ENCODE measurements at regions of chr3 and their contacts with region 1.

Region 1: DNA sequence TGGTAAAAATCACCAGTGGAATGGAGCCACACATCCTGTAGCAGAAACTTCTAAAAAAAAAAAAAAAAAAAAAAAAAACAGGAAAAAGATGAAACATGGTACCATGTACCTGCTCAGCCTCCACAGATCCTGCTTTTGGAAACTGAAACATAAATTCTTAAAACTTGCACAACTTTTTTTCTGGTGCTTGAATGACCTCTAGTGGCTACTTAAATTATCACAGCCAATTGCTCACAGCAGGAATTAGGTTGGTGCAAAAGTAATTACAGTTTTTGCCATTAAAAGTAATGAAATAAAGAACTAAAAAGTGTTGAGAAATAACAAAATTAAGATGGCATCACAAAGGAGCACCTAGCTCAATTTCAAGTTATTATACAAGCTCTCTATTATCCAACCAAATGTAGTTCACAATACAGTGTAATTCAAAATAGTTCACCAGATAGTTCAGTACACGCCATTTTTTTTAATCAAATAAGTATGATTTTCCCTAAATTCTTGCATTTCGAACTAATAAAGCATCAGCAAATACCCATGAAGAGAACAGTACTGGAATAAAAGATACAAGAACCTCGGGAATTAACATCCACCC is 80.6 kb downstream of the ULK4 start:
- DNase-seq: no peak
- ATAC-seq: no peak
- H3K4me3 ChIP-seq: no peak overlapping the region
- H3K27ac ChIP-seq: no peak overlapping the region
- H3K4me1 ChIP-seq: no peaks in the 10 kb centered on the region
- H3K27me3 ChIP-seq: no peaks in the 10 kb centered on the region
- CTCF ChIP-seq: peak; percentile 60 to 81 (median 73)
- POLR2A ChIP-seq: no peak

Region 2: DNA sequence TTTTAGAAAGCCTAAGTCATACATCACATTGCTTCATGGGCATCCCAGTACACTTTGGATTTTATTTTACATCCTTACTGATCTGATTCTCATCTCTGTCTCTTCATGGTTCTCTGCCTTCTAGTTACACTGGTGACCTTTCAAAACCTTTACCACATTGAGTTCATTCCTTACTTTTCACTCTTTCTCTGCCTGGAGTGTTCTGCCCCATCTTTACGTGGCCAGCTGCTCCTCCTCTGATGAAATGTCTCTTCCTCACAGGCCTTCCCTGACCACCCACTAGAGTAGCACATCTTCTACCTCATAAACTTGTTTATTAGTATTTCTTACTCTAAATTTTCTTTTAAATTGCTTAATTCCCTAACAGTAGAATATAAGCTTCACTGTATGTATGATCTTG is 664.3 kb before region 1 on chr3:
- intact Hi-C with region 1: loop called in 1 of 10 experiments (anchors 10 kb)
- DNase-seq: no peak
- ATAC-seq: peak in 1 of 4 donors; percentile 24
- H3K4me3 ChIP-seq: no peak overlapping the region
- H3K27ac ChIP-seq: no peak overlapping the region
- H3K4me1 ChIP-seq: peaks cover 16 to 98% (median 84%) of the 10 kb centered on the region in 12 donors
- H3K27me3 ChIP-seq: no peaks in the 10 kb centered on the region
- CTCF ChIP-seq: no peak
- POLR2A ChIP-seq: no peak

Region 3: GRCh38 chr3:41424543-41425300 is 456.6 kb before region 1 on chr3:
- intact Hi-C with region 1: no loop called
- DNase-seq: no peak
- ATAC-seq: no peak
- H3K4me3 ChIP-seq: no peak overlapping the region
- H3K27ac ChIP-seq: no peak overlapping the region
- H3K4me1 ChIP-seq: no peaks in the 10 kb centered on the region
- H3K27me3 ChIP-seq: no peaks in the 10 kb centered on the region
- CTCF ChIP-seq: no peak
- POLR2A ChIP-seq: no peak